ENCODE measurements at regions of chr4 and their contacts with region 1.

Region 1: DNA sequence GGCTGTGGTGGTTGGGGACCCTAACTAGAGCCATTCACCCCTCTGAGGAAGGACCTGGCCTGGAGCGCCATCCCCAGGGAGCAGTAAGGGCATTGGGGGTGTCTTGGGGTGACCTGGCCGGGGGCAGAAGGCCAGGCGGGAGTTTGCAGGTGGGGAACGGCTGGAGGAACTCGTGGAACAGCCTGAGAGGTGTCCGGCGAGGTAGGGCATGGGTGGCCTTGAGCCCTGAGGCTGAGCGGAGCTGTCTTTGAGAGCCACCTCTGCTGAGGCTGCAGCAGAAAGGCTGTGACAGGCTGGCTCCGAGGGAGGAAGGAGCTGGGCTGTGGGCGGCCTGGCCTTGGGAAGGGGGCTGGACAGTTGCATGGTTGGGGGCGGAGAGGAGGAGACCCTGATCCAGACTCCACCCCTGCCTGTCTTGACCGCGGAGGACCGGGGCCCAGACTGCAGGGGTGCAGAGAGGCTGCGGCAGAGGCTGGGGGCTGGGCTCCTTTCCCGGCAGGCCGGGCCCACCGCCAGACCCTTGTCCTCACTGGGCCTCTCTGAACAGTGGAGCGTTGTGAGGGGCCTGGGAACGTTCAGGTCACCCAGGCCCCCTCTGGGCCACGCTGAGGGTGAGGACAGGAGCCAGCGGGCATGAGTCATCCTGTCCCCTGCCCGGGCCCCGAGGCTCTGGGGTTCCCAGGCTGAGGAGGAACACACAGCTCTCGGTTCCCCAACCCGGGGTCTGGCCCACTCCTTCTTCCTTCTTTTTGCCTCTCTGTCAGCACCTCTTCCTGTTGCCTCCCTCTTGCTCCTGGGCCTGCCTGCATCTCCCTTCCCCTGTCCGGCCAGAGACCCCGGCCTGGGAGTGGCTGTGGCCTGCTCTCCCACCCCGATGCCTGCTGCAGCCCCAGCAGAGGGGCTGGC is 8.1 kb downstream of the SH3BP2 start:
- DNase-seq: peak; percentile 79
- ATAC-seq: peak; percentile 92
- H3K4me3 Mint-ChIP-seq: no peak overlapping the region
- H3K27ac Mint-ChIP-seq: peak overlapping the region; percentile 76
- H3K4me1 Mint-ChIP-seq: peaks cover 18% of the 10 kb centered on the region
- H3K27me3 Mint-ChIP-seq: no peaks in the 10 kb centered on the region; the same call in 1 of the 2 replicates
- CTCF ChIP-seq: no peak

Region 2: GRCh38 chr4:2637956-2638552 is 162.9 kb before region 1 on chr4:
- CTCF ChIA-PET with region 1: no interaction called
- POLR2A ChIA-PET with region 1: no interaction called
- DNase-seq: no peak
- ATAC-seq: no peak
- H3K4me3 Mint-ChIP-seq: no peak overlapping the region
- H3K27ac Mint-ChIP-seq: peak overlapping the region; percentile 6; the same call in 1 of the 2 replicates
- H3K4me1 Mint-ChIP-seq: no peaks in the 10 kb centered on the region
- H3K27me3 Mint-ChIP-seq: no peaks in the 10 kb centered on the region
- CTCF ChIP-seq: no peak

Region 3: DNA sequence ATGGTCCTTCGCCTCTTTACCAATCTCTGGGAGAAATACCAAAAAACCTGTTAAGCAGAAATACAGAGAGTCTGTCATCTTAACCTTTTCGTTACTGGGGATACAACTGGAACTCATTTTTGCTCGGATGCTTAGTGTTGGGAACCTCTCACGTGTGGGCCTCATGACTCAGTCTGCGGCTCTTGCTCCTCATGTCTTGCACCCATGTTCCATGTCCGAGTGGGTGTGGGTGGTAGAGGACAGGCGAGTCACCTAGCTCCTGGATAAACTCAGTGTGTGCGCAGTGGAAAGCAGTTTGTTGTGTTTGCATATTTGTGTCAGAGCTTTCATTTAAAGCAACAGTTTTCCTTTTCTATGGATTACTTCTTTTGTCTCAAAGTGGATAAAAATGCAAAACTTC is 115.4 kb before region 1 on chr4:
- CTCF ChIA-PET with region 1: no interaction called
- POLR2A ChIA-PET with region 1: interaction called, 11 read pairs
- DNase-seq: no peak
- ATAC-seq: no peak
- H3K4me3 Mint-ChIP-seq: no peak overlapping the region
- H3K27ac Mint-ChIP-seq: peak overlapping the region; percentile 43
- H3K4me1 Mint-ChIP-seq: no peaks in the 10 kb centered on the region
- H3K27me3 Mint-ChIP-seq: no peaks in the 10 kb centered on the region
- CTCF ChIP-seq: no peak

Measured in WTC11 (cell line).